ENCODE measurements at regions of chr5 and their contacts with region 1.

Region 1: DNA sequence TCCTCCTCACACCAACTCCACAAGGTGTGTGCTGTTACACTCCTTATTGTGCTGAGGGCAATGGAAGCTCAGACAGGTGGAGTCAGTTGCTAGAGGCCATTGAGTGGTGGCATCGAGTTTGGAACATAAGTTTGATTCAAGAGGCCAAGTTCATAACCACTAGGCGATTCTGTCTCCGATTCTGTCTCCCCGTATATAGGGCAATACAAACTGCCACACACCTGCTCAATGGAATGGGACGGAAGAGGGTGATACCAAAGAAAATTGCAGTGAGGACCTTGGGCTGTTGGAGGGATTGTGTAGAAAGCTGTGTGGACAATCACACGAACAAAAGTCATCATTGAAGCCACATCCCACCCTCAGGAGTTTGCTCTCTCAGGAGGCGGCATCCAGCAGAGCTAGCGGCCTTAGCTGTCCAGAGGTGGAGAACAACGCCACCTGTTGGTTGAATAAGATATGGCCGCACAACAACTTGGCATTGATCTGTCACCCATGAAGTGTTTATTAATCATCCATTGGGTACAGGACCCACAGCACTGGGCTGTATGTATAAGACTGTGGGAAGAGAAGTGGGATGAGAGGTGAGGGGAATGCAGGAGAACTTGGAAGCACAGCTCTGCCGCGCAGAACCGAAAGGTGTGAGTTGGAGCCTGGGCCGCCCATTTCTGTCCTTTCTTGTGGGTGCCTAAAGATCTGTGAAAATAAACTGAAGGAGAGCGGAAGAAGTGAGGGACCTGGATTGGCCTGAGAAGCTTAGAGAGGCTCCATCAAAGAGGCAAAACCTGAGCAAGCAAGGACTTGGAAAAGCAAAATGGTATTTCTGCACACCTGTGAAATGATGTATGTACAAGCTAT is 16.1 kb upstream of the NEUROG1 start:
- DNase-seq: peak; percentile 67
- H3K4me3 ChIP-seq: no peak overlapping the region
- H3K27ac ChIP-seq: no peak overlapping the region
- H3K4me1 ChIP-seq: no peaks in the 10 kb centered on the region
- H3K27me3 ChIP-seq: peaks cover 44% of the 10 kb centered on the region
- CTCF ChIP-seq: peak; percentile 72 to 88 (median 80)
- EP300 ChIP-seq: no peak
- POLR2A ChIP-seq: no peak

Region 2: DNA sequence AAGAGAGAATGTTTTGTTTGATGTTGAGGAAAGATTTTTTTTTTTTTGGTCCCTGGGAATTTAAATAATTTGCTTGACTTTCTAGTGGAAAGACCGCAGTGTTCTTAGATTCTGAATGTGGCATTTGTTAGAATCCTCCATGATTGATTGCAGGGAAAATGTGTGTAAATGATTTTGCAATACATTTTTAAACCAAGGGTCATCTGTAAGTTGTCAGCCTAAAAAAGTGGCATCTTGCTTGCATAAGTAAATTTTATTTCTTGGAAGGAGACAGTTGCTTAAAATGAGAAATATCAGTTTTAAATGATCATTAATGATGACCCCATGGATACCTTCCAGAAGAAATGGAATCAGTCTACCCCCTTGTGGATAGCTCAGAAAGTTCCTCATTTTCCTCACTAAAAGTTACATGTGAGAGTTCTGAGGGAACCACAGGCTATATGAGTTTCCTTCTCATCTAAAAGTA is 177.5 kb after region 1 on chr5:
- in situ Hi-C with region 1: loop called in 1 of 4 experiments (anchors 10 kb)
- intact Hi-C with region 1: no loop called
- DNase-seq: no peak
- H3K4me3 ChIP-seq: no peak overlapping the region
- H3K27ac ChIP-seq: peak overlapping the region in 2 of 4 donors; percentile 28 to 52
- H3K4me1 ChIP-seq: no peaks in the 10 kb centered on the region
- H3K27me3 ChIP-seq: no peaks in the 10 kb centered on the region
- CTCF ChIP-seq: peak in 2 of 5 experiments; percentile 25 to 32
- EP300 ChIP-seq: no peak
- POLR2A ChIP-seq: no peak